Activated B cell treated with CpG ODN at 0.5 μM for 24 hours (primary cell): ENCODE measurements at regions of chr7 and their contacts with region 1.

Region 1: DNA sequence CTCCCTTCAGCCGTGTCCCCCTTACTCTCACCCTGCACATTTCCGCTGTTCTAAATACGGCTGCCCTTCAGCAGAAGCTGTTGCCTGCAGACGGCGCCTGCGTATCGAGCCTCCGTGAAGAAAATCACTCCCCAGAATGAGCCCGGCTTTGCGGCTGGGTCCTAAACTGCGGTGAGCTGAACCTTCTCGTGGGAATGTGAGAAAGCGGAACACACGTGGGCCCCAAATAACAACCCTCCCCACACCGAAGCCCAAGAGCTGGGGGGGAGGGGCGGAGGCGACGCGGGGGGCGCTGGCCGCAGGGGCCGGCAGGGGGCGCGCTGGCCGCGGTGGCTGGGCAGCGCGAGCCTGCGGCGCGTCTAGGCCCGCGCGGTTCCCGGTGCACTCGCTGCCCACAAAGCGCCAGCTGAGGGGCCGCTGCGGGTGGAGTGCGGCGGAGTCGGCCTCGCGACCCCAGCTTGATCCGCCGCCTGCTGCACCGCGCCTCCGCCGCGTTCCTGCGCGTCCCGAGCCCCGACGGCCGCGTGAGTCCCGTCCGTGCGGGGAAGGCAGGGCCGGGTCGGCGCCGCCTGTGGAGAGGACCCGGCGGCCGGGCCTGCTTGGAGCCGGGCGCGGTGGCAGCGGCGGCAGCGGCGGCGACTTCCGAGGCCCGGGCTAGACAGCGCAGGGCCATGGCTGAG is at the start of gene ZNF398:
- DNase-seq: peak; percentile 87
- ATAC-seq: peak; percentile 84
- H3K4me3 Mint-ChIP-seq: peak within 1 kb of the TSS; percentile 91
- H3K27ac Mint-ChIP-seq: peak within 1 kb of the TSS; percentile 94
- H3K4me1 Mint-ChIP-seq: peaks cover 32% of the 10 kb centered on the region
- H3K27me3 Mint-ChIP-seq: no peaks in the 10 kb centered on the region
- CTCF ChIP-seq: no peak
- total RNA-seq, gene ZNF398: 15.1 and 17.3 TPM in 2 replicates

Region 2: GRCh38 chr7:148987010-148987750 is 160.0 kb before region 1 on chr7:
- CTCF ChIA-PET with region 1: no interaction called
- POLR2A ChIA-PET with region 1: interaction called, 3 read pairs
- intact Hi-C with region 1: loop called (anchors 1 kb)
- DNase-seq: peak; percentile 60
- ATAC-seq: peak; percentile 85
- H3K4me3 Mint-ChIP-seq: peak overlapping the region; percentile 96
- H3K27ac Mint-ChIP-seq: peak overlapping the region; percentile 93
- H3K4me1 Mint-ChIP-seq: peaks cover 50% of the 10 kb centered on the region
- H3K27me3 Mint-ChIP-seq: peaks cover 2% of the 10 kb centered on the region
- CTCF ChIP-seq: no peak

Region 3: GRCh38 chr7:149071641-149072437 is 75.4 kb before region 1 on chr7:
- CTCF ChIA-PET with region 1: interaction called, 11 read pairs
- POLR2A ChIA-PET with region 1: no interaction called
- intact Hi-C with region 1: no loop called
- DNase-seq: no peak
- ATAC-seq: peak; percentile 45
- H3K4me3 Mint-ChIP-seq: no peak overlapping the region
- H3K27ac Mint-ChIP-seq: no peak overlapping the region
- H3K4me1 Mint-ChIP-seq: peaks cover 4% of the 10 kb centered on the region
- H3K27me3 Mint-ChIP-seq: no peaks in the 10 kb centered on the region
- CTCF ChIP-seq: no peak

Region 4: DNA sequence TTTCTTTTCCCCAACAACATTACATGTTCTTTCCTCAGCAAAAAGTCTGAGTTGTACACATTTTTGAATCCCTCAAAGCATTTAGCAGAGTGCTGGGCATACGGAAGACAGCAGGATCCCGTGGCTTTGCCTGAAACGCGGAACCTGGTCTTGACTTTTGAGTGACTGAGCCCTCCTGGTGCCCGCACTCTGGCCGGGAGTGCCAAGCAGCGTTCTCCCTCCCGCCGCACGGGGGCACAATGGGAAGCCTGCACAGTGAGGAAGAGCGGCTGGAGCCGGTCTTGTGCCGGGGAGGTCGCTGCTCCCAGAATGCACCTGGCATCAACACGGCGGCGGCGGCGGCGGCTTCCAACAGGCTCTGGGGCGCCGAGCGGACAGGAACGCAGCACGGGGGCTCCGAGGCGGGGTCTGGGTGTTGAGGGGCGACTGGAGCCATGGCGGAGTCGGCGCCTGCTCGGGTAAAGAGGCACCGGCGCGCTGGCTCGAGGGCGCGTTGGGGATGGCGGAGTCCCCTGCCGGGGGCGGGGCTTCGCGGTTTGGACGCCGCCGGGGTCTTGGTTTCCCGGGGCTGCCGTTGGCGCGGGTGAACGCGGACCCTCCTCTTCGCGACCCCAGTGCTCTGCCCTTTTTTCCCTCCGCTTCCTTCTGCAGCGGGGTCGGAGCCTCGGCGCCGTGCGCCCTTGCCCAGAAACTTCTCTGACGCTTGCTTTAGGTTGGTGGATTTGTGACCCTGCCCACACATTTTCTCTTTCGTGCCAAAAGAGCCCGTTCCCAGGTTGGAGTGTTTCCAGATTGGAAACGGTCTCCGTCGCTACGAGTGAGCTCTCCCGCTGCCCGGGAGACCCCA is 92.4 kb after region 1 on chr7 and contains the start of gene ZNF212:
- CTCF ChIA-PET with region 1: interaction called, 5 read pairs
- POLR2A ChIA-PET with region 1: interaction called, 5 read pairs
- intact Hi-C with region 1: loop called (anchors 1 kb)
- DNase-seq: peak; percentile 82
- ATAC-seq: peak; percentile 99
- H3K4me3 Mint-ChIP-seq: peak within 1 kb of the TSS; percentile 91
- H3K27ac Mint-ChIP-seq: peak within 1 kb of the TSS; percentile 76
- H3K4me1 Mint-ChIP-seq: peaks cover 37% of the 10 kb centered on the region
- H3K27me3 Mint-ChIP-seq: no peaks in the 10 kb centered on the region
- CTCF ChIP-seq: no peak
- total RNA-seq, gene ZNF212: 17.0 and 21.0 TPM in 2 replicates

Region 5: DNA sequence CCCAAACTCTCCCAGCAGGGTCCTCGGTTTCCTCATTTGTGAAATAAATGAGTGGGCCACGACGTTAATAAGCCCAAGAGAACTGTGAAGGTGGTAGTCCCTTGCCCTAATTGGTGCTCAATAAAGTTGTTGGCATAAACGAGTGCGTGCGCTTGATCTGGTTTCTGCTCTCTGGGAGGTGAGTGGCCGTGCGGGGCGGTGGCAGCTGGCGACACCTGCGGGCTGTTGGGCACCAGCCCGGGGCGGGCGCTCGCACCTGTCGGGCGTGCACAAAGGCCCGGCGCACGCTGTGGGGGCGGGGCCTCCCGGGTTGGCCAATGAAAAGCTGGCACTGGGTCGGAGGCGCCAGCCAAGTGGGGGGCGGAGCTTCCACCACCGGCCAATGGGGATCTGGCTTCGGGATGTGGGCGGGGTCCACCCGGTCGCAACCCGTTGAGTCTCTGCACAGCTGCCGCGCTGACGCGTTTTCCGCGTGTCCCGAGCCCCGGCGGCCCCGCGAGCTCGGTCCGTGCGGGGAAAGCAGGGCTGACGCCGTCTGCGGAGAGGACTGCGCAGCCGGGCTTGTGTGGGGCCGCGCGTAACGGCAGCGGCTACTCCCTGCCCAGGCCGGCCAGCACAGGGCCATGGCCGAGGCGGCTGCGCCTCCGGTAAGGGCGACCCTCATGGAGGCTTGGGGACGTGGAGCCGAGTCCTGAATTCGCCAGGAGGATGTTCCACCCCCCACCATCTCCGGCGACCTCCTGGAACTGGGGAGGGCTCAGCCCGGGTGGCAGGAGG is 137.8 kb after region 1 on chr7:
- CTCF ChIA-PET with region 1: no interaction called
- POLR2A ChIA-PET with region 1: interaction called, 11 read pairs
- intact Hi-C with region 1: loop called (anchors 5 kb)
- DNase-seq: peak; percentile 95
- ATAC-seq: peak; percentile 99
- H3K4me3 Mint-ChIP-seq: peak overlapping the region; percentile 89
- H3K27ac Mint-ChIP-seq: no peak overlapping the region
- H3K4me1 Mint-ChIP-seq: peaks cover 27% of the 10 kb centered on the region
- H3K27me3 Mint-ChIP-seq: no peaks in the 10 kb centered on the region
- CTCF ChIP-seq: no peak

Region 6: GRCh38 chr7:149296368-149296767 is 149.2 kb after region 1 on chr7:
- CTCF ChIA-PET with region 1: no interaction called
- POLR2A ChIA-PET with region 1: no interaction called
- intact Hi-C with region 1: no loop called
- DNase-seq: no peak
- ATAC-seq: no peak
- H3K4me3 Mint-ChIP-seq: no peak overlapping the region
- H3K27ac Mint-ChIP-seq: no peak overlapping the region
- H3K4me1 Mint-ChIP-seq: peaks cover 2% of the 10 kb centered on the region
- H3K27me3 Mint-ChIP-seq: no peaks in the 10 kb centered on the region
- CTCF ChIP-seq: no peak